AG04449 (cell line): ENCODE measurements at regions of chr1 and their contacts with region 1.

Region 1: GRCh38 chr1:201436393-201436792 is 14.9 kb upstream of the TNNI1 start:
- DNase-seq: no peak
- H3K4me3 ChIP-seq: no peak overlapping the region
- CTCF ChIP-seq: peak; percentile 46

Region 2: DNA sequence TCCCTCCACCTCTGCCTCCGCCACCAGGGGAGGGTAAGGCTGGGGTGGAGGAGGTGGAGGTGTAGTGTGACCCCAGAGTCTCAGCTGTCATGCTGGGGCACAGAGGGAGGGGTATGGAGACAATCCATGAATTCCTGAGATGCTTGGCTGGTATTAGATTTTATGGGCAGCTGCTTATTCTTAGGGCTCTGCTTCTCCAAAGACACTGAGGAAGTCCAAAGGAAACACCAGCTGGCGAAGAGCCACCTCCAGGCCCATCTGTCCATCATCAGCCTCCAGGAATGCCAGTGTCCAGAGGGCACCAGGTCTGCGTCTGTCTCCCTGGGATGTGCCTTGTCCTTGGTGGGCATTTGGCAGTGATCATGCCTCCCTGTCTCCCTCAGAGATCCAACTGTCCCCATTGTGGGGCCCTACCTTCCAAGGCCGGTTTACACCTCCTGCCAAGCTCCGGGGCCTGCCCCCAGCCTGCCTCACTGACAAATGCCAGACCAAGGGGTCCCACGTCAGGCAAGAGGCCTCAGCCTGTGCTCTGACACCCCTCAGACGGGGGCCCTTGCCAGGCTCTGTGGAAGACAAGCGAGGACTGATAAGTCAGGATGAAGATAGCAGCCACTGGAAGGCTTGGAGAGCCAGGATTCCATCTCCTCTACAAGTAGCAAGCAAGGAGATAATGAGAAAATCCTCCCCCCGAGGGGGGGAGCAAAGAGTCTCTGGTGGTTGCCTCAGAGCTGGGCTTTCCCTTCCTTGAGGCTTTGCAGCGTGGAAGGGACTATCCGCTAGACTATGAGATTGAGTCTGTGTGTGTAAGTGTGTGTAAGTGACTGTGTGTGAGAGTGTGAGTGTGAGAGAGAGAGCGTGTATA is 16.4 kb before region 1 on chr1:
- CTCF ChIA-PET with region 1: interaction called, 32 read pairs
- POLR2A ChIA-PET with region 1: no interaction called
- DNase-seq: no peak
- H3K4me3 ChIP-seq: no peak overlapping the region
- CTCF ChIP-seq: no peak

Region 3: DNA sequence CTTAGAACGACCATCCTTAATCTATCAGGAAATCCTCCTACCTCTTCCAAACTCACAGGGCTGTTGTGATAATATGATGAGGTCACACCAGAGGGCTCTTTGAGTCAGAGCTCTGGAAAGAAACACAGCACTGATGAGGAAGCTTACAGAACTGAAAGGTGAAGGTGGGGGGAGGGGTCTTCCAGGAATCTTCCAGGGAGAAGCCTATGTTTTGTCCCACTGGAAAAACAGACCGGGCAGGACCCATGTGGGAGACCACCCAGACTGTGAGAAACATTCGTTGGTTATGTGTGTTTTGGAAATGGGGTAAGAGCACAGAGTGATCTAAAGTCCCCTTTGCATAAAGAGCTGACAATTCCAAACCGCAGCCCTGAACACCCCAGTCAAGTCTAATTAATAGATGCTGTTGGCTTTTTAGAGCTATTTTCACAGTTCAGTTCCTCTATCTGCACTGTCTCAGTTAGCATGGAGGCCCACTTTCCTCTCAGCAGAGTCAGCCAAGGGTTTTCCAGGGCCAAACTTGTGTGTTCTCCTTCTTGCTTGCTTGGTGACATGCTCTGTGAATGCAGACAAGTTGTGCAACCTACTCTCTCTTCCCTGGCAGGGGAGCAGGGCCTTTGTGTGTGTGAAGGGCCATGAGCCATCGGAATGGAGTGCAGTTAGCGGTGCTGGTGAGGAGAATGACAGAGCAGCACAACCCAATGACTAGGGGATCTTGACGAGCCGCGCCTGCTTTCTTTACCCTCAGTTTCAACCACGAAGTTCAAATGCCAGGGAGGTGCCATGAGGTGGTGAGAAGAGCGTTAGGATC is 20.3 kb after region 1 on chr1:
- CTCF ChIA-PET with region 1: interaction called, 179 read pairs
- POLR2A ChIA-PET with region 1: interaction called, 13 read pairs
- DNase-seq: peak; percentile 96
- H3K4me3 ChIP-seq: no peak overlapping the region
- CTCF ChIP-seq: no peak

Region 4: GRCh38 chr1:201481761-201482493 is 45.5 kb after region 1 on chr1:
- CTCF ChIA-PET with region 1: interaction called, 153 read pairs
- POLR2A ChIA-PET with region 1: no interaction called
- DNase-seq: no peak
- H3K4me3 ChIP-seq: no peak overlapping the region; the same call in 1 of the 2 replicates
- CTCF ChIP-seq: peak; percentile 93